Endothelial cell of umbilical vein (primary cell): ENCODE measurements at regions of chr6 and their contacts with region 1.

Region 1: DNA sequence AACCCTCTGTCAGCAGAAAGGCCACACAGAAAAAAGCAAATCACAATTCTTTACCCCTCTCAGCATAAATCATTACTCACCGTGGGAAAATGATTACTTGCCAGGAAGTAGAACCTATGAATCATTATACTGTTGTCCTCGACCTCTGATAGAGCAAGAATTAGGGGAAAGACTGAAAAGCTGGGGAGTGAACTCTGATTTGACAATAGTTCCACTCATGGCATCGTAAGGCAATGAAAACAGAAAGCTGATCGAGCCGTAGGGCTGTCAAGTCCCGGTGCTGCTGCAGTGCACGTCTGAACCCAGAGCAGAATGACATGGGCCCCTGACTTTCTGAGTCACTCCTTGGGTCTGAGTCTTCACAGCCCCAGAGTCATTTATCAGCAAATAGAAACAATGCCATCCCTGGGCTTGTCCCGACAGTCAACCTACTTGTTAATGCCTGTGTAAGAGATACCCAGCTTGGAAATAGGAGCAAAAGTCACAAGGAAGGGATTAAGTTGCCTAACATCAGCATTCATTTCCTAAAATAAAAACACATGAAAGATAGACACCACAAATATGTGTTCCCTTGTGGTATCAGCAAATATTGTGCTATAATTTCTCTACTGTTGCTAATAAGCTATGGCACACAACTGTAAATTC is 224.8 kb upstream of the MARCKS start:
- DNase-seq: peak; percentile 99
- H3K4me3 ChIP-seq: peak overlapping the region in 2 of 3 experiments; percentile 6 to 33
- H3K27ac ChIP-seq: peak overlapping the region; percentile 83
- H3K4me1 ChIP-seq: peaks cover 22% of the 10 kb centered on the region
- H3K27me3 ChIP-seq: no peaks in the 10 kb centered on the region
- CTCF ChIP-seq: no peak
- POLR2A ChIP-seq: no peak

Region 2: DNA sequence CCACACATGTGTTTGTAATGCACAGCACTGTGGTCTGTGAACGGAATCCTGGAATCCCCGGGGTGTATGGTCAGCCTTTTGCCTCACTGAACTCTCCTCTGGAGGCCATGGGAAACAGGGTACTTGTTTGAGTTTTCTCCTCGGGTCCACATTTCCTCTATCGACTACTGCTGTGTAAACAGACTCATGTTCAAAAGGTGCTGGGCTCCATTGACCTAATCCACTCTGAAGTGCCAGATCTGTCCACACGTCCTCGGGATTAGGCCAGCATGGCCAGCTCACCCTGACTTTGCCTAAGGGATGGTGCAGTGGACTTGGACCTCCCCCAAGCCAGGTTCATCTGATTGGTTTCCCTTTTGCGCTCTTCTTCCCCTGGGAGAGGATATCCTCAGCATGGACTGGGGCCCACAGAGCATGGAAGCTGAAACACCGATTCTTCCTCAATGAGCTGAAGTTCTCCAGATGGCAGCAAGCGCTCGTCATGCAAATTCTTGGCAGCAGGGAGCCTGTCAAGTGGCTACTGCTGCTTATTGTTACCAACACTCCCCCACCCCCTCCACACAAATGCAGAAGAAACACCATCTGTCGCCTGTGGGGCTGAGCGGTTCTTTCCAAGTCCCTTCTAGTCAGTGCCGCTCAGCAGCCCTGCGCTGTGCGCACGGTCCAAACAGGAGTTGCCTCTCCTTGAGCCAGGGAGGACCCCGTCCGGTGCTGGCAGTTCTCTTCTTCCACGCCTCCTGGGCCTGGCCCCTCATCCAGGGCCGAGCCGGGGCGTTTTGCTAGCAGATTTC is 67.8 kb before region 1 on chr6:
- CTCF ChIA-PET with region 1: no interaction called
- POLR2A ChIA-PET with region 1: no interaction called
- dilution Hi-C with region 1: no loop called
- intact Hi-C with region 1: loop called (anchors 5 kb)
- DNase-seq: peak; percentile 56
- H3K4me3 ChIP-seq: no peak overlapping the region
- H3K27ac ChIP-seq: no peak overlapping the region
- H3K4me1 ChIP-seq: peaks cover 21% of the 10 kb centered on the region
- H3K27me3 ChIP-seq: no peaks in the 10 kb centered on the region
- CTCF ChIP-seq: no peak
- POLR2A ChIP-seq: no peak

Region 3: DNA sequence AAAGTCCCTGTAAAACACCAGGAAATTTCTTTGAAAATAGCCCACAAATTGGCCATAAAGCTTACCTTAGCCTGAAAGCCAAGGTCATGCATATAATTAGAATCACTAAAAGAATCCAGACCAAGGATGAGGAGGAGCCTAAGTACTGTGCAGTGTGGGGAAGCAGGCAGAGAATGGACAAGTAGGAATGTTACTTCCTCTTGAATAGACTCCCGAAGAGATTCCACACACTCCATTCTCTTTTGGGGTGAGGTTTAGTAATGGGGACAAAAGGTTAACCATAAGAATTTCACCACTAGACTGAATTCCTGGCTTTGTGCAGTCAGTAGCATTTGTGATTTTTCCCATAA is 197.3 kb after region 1 on chr6:
- CTCF ChIA-PET with region 1: no interaction called
- POLR2A ChIA-PET with region 1: no interaction called
- dilution Hi-C with region 1: no loop called
- intact Hi-C with region 1: no loop called
- DNase-seq: no peak
- H3K4me3 ChIP-seq: no peak overlapping the region
- H3K27ac ChIP-seq: no peak overlapping the region
- H3K4me1 ChIP-seq: no peaks in the 10 kb centered on the region
- H3K27me3 ChIP-seq: no peaks in the 10 kb centered on the region
- CTCF ChIP-seq: no peak
- POLR2A ChIP-seq: no peak

Region 4: DNA sequence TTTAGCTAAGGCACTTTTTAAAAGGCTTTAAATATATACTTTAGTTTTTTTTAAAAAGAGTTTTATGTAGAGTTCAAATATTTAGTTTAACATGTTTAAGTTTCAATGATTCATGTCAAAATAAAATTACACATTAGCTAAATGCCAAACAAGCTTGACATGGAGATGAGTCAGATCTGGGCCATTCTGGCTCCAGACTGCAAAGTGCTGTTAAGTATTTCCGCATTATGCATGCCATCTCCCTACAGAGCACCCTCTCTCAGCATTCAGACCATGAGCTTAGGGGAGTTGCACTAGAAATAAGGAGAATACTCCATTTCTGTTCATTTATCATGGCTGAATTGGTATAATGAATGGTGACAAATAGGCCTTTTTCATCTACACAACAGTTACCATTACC is 731.9 kb after region 1 on chr6:
- CTCF ChIA-PET with region 1: no interaction called
- POLR2A ChIA-PET with region 1: no interaction called
- dilution Hi-C with region 1: no loop called
- intact Hi-C with region 1: no loop called
- DNase-seq: no peak
- H3K4me3 ChIP-seq: no peak overlapping the region
- H3K27ac ChIP-seq: no peak overlapping the region
- H3K4me1 ChIP-seq: no peaks in the 10 kb centered on the region
- H3K27me3 ChIP-seq: no peaks in the 10 kb centered on the region
- CTCF ChIP-seq: no peak
- POLR2A ChIP-seq: no peak